ENCODE measurements at regions of chrX and their contacts with region 1.

Region 1: DNA sequence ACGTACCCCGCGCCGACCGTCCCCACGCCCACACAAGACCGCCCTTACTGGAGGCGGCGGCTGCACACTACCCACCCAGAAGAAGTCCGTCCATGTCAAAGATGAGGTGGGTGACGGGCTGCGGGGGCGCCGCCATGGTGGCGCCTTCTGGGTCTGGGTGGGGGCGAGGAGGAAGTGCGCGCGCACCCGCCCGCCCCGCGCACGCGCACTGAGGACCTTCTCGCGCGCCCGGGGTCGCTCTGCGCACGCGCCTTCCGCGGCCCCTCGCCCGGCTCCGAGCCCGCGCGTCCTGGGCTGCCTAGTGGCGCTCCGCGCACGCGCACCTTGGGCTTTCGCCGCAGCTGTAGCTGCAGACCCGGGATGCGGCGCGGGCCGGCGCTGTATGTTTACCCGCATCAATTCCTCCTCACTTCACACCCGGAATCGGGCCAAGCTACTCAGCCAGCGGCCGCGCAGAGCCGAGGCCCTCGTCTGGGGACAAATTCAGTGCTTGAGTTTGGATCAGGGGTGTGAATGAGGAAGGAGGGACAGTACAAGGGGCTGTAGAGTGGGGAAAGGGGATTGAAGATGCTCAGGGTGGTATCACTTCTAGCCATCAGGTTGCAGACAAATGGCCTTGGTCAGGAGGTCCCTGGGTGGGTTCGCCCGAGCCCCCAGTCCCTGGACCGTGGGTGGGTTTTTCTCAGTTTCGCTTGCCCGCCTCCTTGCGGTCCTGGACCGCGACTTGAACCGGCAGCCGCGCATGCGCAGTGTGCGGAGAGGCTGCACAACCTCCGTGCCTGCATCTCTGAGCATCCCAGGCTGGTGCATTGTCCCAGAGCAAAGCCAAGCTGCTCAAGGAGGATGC is at the start of gene PUDP:
- DNase-seq: peak; percentile 79 to 95 (median 94)
- H3K4me3 ChIP-seq: peak within 1 kb of the TSS; percentile 57 to 99
- H3K4me3 Mint-ChIP-seq: peak within 1 kb of the TSS; percentile 92 to 96 (median 94)
- H3K27ac ChIP-seq: peak within 1 kb of the TSS; percentile 65
- H3K27ac Mint-ChIP-seq: peak within 1 kb of the TSS; percentile 90 to 96 (median 94)
- H3K4me1 ChIP-seq: peaks cover 16% of the 10 kb centered on the region
- H3K4me1 Mint-ChIP-seq: peaks cover 13 to 43% (median 20%) of the 10 kb centered on the region in 4 donors
- H3K27me3 ChIP-seq: no peaks in the 10 kb centered on the region
- H3K27me3 Mint-ChIP-seq: no peaks in the 10 kb centered on the region
- total RNA-seq, gene PUDP: 10.7 to 11.9 TPM

Region 2: DNA sequence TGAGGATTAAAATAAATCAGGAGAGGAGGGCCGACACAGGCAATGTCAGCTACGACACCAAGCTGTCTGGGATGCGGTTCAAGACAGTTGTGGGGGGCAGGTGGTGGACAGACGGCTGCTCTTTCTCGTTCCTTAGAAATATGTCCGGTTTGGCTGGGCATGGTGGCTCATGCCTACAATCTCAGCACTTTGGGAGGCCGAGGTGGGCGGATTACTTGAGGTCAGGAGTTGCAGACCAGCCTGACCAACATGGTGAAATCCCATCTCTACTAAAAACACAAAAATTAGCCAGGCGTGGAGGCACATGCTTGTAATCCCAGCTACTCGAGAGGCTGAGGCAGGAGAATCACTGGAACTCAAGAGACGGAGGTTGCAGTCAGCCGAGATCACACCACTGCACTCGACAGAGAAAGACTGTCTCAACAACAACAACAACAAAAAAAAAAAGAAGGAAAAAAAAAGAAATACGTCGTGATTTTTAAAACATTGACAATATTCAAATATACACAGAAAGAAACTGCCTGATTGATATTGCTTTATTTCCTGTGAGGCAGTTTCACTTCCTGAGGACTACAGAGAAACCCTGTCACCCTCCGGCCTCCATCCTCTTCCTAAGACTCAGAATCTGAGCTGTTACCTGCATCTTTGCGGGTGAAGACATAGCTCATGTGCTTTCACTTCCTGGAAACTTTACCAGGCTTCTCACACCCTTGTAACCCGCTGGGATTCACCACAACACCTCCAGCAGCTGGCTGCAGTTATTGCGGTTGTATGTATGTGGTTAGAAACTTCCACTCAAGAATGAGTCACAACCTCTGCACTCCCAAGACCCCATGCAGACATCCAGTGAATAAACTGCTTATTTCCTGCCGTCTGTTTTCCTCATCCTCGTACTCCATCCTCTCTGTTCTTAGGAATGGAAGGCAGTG is 64.5 kb before region 1 on chrX:
- CTCF ChIA-PET with region 1: no interaction called
- POLR2A ChIA-PET with region 1: no interaction called
- intact Hi-C with region 1: loop called (anchors 1 kb)
- DNase-seq: peak; percentile 61 to 79 (median 73)
- H3K4me3 ChIP-seq: no peak overlapping the region
- H3K4me3 Mint-ChIP-seq: peak overlapping the region; percentile 45 to 91 (median 79)
- H3K27ac ChIP-seq: peak overlapping the region; percentile 13
- H3K27ac Mint-ChIP-seq: peak overlapping the region; percentile 67 to 96 (median 91)
- H3K4me1 ChIP-seq: peaks cover 40% of the 10 kb centered on the region
- H3K4me1 Mint-ChIP-seq: peaks cover 29 to 76% (median 53%) of the 10 kb centered on the region in 4 donors
- H3K27me3 ChIP-seq: no peaks in the 10 kb centered on the region
- H3K27me3 Mint-ChIP-seq: no peaks in the 10 kb centered on the region

Region 3: DNA sequence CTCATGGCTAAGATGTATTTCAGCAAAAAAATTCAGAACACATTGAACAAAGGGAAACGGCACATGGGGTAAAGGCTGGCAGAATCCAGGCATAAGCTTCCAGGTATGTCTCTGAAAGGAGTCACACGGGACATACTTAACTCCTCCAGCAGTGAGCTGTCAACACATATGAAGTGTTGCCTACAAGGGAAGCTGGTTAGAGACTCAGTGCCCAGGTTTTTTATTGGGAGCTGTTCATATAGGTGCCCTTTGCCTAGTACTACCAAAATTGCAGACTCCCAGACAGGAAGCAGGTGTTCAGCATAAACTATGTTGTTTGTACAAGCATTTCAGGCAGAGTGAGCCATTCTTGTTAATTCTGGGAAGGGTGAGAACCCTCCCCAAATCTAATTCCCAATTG is 77.1 kb after region 1 on chrX:
- CTCF ChIA-PET with region 1: no interaction called
- POLR2A ChIA-PET with region 1: no interaction called
- intact Hi-C with region 1: no loop called
- DNase-seq: no peak
- H3K4me3 ChIP-seq: no peak overlapping the region
- H3K4me3 Mint-ChIP-seq: no peak overlapping the region
- H3K27ac ChIP-seq: no peak overlapping the region
- H3K27ac Mint-ChIP-seq: no peak overlapping the region
- H3K4me1 ChIP-seq: no peaks in the 10 kb centered on the region
- H3K4me1 Mint-ChIP-seq: no peaks in the 10 kb centered on the region
- H3K27me3 ChIP-seq: no peaks in the 10 kb centered on the region
- H3K27me3 Mint-ChIP-seq: no peaks in the 10 kb centered on the region